Mammary epithelial cell (primary cell): ENCODE measurements at regions of chr21 and their contacts with region 1.

Region 1: GRCh38 chr21:36156339-36156814 is 247 bp upstream of the DOP1B start:
- DNase-seq: peak; percentile 97
- H3K4me3 ChIP-seq: peak overlapping the region; percentile 55 to 94 (median 78)
- H3K27ac ChIP-seq: peak overlapping the region; percentile 58
- H3K4me1 ChIP-seq: peaks cover 13% of the 10 kb centered on the region
- H3K27me3 ChIP-seq: no peaks in the 10 kb centered on the region
- CTCF ChIP-seq: no peak

Region 2: DNA sequence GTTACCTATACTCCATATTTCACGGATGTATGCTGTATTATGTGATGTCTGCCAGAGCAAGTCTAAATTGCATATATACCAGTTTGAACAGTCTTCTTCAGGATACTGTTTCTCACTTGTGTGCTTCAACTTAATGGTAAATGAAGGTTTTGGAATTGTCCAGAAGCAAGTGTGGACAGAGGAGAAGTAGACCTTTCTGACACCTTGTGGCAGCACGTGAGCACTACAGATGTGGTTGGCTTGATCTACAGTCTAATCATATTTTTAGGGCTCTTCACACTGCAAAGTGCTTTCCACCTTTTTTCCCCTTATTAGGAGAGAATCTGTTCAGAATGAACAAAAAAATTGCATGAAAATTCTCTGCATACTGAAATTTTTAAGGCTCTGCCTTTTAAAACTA is 174.5 kb after region 1 on chr21:
- CTCF ChIA-PET with region 1: no interaction called
- dilution Hi-C with region 1: no loop called
- in situ Hi-C with region 1: no loop called
- intact Hi-C with region 1: loop called (anchors 1 kb)
- DNase-seq: peak; percentile 36
- H3K4me3 ChIP-seq: no peak overlapping the region
- H3K27ac ChIP-seq: no peak overlapping the region
- H3K4me1 ChIP-seq: peaks cover 4% of the 10 kb centered on the region
- H3K27me3 ChIP-seq: no peaks in the 10 kb centered on the region
- CTCF ChIP-seq: peak; percentile 74 to 85

Region 3: GRCh38 chr21:36630485-36631206 is 474.3 kb after region 1 on chr21:
- CTCF ChIA-PET with region 1: no interaction called
- dilution Hi-C with region 1: no loop called
- in situ Hi-C with region 1: no loop called
- intact Hi-C with region 1: no loop called
- DNase-seq: peak; percentile 12
- H3K4me3 ChIP-seq: no peak overlapping the region
- H3K27ac ChIP-seq: no peak overlapping the region
- H3K4me1 ChIP-seq: peaks cover 3% of the 10 kb centered on the region
- H3K27me3 ChIP-seq: peaks cover 2% of the 10 kb centered on the region
- CTCF ChIP-seq: peak; percentile 67 to 74